GM12878 (cell line): ENCODE measurements at regions of chr1 and their contacts with region 1.

Region 1: GRCh38 chr1:58755468-58755872 is 28.4 kb downstream of the JUN start:
- DNase-seq: peak; percentile 33
- ATAC-seq: peak; percentile 77
- H3K4me3 ChIP-seq: no peak overlapping the region
- H3K27ac ChIP-seq: no peak overlapping the region
- H3K4me1 ChIP-seq: 0 out of 2 replicates have a peak, but pooled peaks cover 4% of the 10 kb centered on the region
- H3K27me3 ChIP-seq: no peaks in the 10 kb centered on the region
- CTCF ChIP-seq: no peak
- EP300 ChIP-seq: no peak
- POLR2A ChIP-seq: no peak
- RAD21 ChIP-seq: no peak

Region 2: GRCh38 chr1:58773406-58773840 is 18.0 kb after region 1 on chr1:
- CTCF ChIA-PET with region 1: interaction called, 7 read pairs
- POLR2A ChIA-PET with region 1: no interaction called
- RAD21 ChIA-PET with region 1: no interaction called
- SMC1A ChIA-PET with region 1: interaction called, 10 read pairs
- in situ Hi-C with region 1: no loop called
- intact Hi-C with region 1: no loop called
- DNase-seq: no peak
- ATAC-seq: peak; percentile 81
- H3K4me3 ChIP-seq: no peak overlapping the region
- H3K27ac ChIP-seq: no peak overlapping the region
- H3K4me1 ChIP-seq: peaks cover 10% of the 10 kb centered on the region
- H3K27me3 ChIP-seq: peaks cover 0 to 3% of the 10 kb centered on the region in 2 experiments; a peak in 2 of 4 replicates
- CTCF ChIP-seq: no peak
- EP300 ChIP-seq: no peak
- POLR2A ChIP-seq: no peak
- RAD21 ChIP-seq: no peak